Left colon (tissue), 2 donors: ENCODE measurements at regions of chr6 and their contacts with region 1.

Region 1: DNA sequence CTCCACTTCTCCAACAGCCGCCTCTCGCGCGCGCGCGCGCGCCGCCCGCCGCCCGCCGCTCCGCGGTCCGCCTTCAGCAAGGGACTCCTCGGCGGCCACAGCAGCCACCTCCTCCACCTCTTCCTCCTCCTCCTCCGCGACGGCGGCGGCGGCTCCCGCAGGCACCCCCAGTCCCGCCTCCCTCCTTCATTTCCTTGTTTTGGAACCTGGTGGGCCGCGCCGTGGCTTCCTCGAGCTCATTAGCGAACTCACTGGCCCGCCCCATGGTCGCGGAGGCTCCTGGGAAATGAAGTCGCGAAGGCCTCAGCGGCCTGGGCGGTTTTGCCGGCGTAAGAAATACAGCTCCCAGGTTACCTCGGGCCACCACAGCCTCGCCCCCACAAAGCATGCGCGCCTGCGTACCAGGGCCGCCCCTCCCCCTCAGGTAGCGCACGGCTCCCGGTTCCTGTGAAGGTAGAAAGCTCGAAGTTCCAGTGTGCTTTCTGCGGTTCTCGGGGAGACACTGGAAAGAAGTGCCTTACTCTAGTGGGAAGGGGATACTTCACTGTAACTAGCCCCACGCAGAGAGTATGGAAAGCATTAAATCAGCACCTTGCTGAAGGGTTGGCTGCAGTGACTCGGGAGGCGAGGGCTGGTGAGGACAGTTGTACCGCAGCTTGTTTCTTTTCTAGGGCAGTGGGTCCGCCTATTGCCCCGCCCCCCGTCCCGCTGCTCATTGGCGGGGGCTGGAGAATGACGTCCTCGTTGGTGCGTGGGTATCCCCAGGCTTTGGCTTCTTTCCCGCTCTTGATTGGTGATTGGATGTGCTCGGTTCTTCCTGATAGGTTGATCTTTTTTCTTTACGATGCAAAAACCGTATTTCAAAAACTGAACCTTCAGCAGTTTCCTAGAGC is at the start of gene CDK19:
- DNase-seq: peak; percentile 98 to 99
- ATAC-seq: peak; percentile 89
- total RNA-seq, gene CDK19: 17.9 to 32.4 TPM

Region 2: GRCh38 chr6:110873981-110874879 is 58.8 kb after region 1 on chr6 and contains the start of gene AMD1:
- intact Hi-C with region 1: loop called in 1 of 2 experiments (anchors 5 kb)
- DNase-seq: peak; percentile 98
- ATAC-seq: peak; percentile 78
- total RNA-seq, gene AMD1: 62.0 to 64.1 TPM

Region 3: DNA sequence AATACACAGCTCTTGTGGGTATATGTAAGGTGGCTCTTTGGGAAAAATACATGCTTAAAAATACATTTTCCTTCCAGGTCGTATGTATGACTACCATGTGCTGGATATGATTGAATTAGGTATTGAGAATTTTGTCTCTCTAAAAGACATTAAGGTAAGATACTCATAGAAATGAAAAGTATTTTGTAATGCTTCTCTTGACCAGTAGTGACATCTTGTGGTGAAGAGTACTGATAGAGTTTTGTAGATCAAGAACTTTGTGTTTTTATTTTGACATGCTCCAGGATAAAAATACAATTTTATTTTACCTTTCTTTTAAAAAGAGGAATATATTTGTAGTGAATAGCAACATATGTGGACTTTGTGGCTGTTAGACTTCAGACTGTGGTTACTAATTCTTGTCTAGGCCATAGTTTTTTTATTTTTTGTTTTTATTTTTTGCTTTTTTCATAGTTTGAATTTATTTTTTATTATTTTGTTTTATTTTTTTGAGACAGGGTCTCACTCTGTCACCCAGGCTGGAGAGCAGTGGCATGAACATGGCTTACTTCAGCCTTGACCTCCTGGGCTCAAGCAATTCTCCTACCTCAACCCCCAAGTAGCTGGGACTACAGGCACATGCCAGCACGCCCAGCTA is 184.3 kb after region 1 on chr6:
- intact Hi-C with region 1: no loop called
- DNase-seq: no peak
- ATAC-seq: peak; percentile 46

Region 4: GRCh38 chr6:111030008-111031007 is 214.8 kb after region 1 on chr6:
- intact Hi-C with region 1: no loop called
- DNase-seq: peak in 1 of 2 donors; percentile 11
- ATAC-seq: peak; percentile 75